Activated B cell treated with CpG ODN at 0.5 μM for 24 hours (primary cell): ENCODE measurements at regions of chr4 and their contacts with region 1.

Region 1: DNA sequence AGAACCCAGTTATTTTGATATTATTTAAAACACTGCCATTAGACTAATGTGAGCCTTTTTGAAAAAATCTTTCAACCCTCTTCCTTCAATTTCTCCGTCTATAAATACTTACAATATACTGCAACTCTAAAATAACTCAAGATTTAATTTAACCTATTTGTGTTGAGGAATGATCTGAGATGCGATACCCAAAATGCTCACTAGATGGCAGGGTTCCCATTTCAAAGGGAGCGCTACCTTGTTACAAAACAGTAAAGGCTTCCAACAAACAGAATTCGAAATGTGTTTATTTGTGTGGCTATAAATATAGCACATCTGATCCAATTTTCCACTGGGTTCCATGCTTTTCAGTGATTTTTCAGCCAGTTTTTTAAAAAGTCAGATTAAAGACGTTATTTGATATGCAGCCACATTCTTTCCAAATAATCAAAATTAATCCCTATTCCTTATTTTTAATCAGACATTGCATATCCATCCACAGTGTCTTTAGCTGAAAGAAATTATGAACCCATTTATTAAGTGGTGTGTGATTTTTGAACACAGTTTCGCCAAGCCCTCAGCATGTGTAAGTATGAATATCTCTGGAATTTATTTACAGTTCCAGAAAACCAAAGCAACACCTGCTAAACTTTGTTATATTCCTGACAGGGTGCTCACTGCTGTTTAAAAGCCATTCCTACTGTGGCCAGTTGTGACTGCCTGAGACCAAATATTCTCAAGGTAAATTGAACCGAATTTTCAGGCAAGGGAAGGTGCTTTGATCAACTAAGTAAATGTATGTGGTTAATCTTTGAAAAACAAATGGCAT is 668.0 kb upstream of the LCORL start:
- DNase-seq: no peak
- ATAC-seq: no peak
- H3K4me3 Mint-ChIP-seq: no peak overlapping the region
- H3K27ac Mint-ChIP-seq: no peak overlapping the region
- H3K4me1 Mint-ChIP-seq: no peaks in the 10 kb centered on the region
- H3K27me3 Mint-ChIP-seq: no peaks in the 10 kb centered on the region
- CTCF ChIP-seq: peak; percentile 95

Region 2: DNA sequence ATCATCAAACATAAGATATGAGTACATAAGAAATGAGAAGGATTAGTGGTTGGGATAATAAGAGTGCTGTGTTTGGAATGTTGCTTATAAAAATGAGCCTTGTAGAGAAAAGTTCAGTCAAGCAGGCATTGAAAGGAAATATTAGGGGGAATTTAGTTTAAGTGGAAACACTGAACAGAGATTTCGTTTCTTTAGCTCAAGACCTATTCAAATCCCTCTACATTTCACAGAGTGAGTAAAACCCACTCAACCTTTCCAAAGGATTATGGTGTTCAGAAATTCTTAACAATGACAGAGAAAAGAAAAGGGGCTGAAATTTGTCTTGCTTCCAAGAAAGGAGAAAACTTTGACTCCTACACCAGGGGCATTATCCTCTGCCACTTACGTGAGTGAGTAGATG is 404.4 kb after region 1 on chr4:
- CTCF ChIA-PET with region 1: no interaction called
- POLR2A ChIA-PET with region 1: no interaction called
- intact Hi-C with region 1: loop called (anchors 5 kb)
- DNase-seq: no peak
- ATAC-seq: no peak
- H3K4me3 Mint-ChIP-seq: no peak overlapping the region
- H3K27ac Mint-ChIP-seq: no peak overlapping the region
- H3K4me1 Mint-ChIP-seq: no peaks in the 10 kb centered on the region
- H3K27me3 Mint-ChIP-seq: no peaks in the 10 kb centered on the region
- CTCF ChIP-seq: no peak

Region 3: GRCh38 chr4:20248155-20248558 is 1558.6 kb after region 1 on chr4:
- CTCF ChIA-PET with region 1: no interaction called
- POLR2A ChIA-PET with region 1: no interaction called
- intact Hi-C with region 1: loop called (anchors 2 kb)
- DNase-seq: no peak
- ATAC-seq: no peak
- H3K4me3 Mint-ChIP-seq: no peak overlapping the region
- H3K27ac Mint-ChIP-seq: no peak overlapping the region
- H3K4me1 Mint-ChIP-seq: peaks cover 12% of the 10 kb centered on the region
- H3K27me3 Mint-ChIP-seq: peaks cover 21% of the 10 kb centered on the region
- CTCF ChIP-seq: no peak

Region 4: DNA sequence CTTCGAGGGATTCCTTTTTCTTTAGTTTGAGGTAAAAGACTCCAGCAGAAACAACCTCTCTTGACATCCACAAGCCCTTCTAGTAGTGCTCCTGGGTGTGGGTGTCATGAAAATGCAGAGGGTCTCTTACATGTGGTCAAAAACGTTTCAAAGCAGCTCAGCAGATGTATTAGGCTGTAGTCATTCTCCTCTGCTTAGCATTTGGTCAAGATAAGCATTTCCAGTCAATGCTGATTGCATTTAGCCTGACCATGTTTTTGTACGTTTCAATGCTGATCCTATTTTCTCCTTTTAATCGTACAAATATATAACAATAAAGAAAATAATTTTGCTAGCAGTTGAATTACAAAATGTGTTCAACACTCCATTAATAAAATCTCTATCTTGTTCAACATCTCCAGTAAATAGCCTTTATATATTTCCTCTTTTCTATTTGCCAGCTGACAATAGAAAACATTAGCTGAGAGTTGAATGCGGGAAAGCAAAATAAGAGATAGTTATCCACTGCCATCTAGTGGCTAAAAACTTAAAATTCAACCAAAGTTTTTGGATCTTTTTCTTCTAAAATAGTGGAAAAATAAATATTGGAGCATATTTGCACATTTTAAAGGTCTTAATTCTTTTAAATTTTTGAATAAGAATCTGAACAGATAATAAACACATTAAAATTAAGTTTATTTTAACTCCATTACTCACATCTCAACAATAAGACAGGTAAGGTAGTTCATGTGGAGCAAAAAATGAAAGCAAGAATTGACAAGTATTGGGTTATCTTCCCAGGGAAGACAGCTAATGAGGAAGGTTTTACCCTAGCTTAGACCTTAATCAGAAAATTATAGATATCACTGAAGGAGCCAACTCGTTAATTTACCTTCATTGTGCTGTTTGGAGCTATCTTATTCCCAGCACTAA is 1995.6 kb after region 1 on chr4:
- CTCF ChIA-PET with region 1: interaction called, 7 read pairs
- POLR2A ChIA-PET with region 1: no interaction called
- intact Hi-C with region 1: loop called (anchors 1 kb)
- DNase-seq: no peak
- ATAC-seq: no peak
- H3K4me3 Mint-ChIP-seq: no peak overlapping the region
- H3K27ac Mint-ChIP-seq: no peak overlapping the region
- H3K4me1 Mint-ChIP-seq: no peaks in the 10 kb centered on the region
- H3K27me3 Mint-ChIP-seq: peaks cover 7% of the 10 kb centered on the region
- CTCF ChIP-seq: peak; percentile 89